Caco-2 (cell line): ENCODE measurements at regions of chr1 and their contacts with region 1.

Region 1: DNA sequence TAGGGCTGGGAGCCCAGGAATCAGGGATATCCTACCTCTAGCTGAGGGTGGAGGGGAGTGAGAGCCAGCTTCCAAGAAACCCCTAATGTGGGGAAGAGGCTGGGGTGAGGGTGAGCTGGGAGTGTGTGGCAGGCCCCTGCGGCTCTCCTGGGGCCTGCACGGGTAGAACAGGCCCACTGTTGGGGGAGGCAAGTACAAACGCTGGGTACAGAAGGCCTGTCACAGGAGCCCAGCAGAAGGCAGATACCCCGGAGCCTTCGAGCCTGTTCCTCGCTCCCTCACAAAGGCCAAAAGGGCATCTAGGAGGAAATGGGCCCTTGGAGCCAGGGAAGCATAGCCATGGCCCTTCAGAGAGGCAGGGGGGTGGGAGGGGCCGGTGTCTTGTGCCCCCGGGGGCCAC is 13.7 kb downstream of the CELF3 start:
- DNase-seq: no peak
- H3K4me3 ChIP-seq: no peak overlapping the region
- H3K4me3 Mint-ChIP-seq: no peak overlapping the region
- H3K27ac Mint-ChIP-seq: peak overlapping the region; percentile 50
- H3K4me1 ChIP-seq: peaks cover 3% of the 10 kb centered on the region; the same call in 1 of the 2 replicates
- H3K4me1 Mint-ChIP-seq: peaks cover 4% of the 10 kb centered on the region
- H3K27me3 ChIP-seq: no peaks in the 10 kb centered on the region
- H3K27me3 Mint-ChIP-seq: no peaks in the 10 kb centered on the region
- CTCF ChIP-seq: no peak

Region 2: DNA sequence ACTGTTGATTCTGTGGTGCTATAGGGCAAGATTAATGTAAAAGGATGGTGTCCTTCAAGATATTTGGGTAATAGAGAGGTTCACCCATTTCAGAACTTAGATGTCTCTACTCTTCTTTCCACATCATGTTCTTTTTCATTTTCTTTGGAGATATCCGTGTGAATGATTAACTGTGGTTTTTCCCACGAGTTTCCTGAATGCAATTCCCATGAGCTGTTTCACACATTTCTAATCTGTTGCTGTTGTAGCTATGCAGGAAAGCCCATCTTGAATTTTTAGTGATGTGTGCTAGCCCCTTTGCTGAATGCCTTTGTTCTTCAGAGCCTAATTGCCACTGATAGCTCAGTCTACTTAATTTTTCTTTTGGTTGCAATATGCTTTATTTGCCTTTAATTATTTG is 63.5 kb before region 1 on chr1:
- CTCF ChIA-PET with region 1: no interaction called
- POLR2A ChIA-PET with region 1: interaction called, 10 read pairs
- intact Hi-C with region 1: no loop called
- DNase-seq: no peak
- H3K4me3 ChIP-seq: no peak overlapping the region
- H3K4me3 Mint-ChIP-seq: no peak overlapping the region
- H3K27ac Mint-ChIP-seq: no peak overlapping the region
- H3K4me1 ChIP-seq: peaks cover 25% of the 10 kb centered on the region
- H3K4me1 Mint-ChIP-seq: peaks cover 19% of the 10 kb centered on the region
- H3K27me3 ChIP-seq: no peaks in the 10 kb centered on the region
- H3K27me3 Mint-ChIP-seq: no peaks in the 10 kb centered on the region
- CTCF ChIP-seq: no peak